ENCODE measurements at regions of chr12 and their contacts with region 1.

Region 1: DNA sequence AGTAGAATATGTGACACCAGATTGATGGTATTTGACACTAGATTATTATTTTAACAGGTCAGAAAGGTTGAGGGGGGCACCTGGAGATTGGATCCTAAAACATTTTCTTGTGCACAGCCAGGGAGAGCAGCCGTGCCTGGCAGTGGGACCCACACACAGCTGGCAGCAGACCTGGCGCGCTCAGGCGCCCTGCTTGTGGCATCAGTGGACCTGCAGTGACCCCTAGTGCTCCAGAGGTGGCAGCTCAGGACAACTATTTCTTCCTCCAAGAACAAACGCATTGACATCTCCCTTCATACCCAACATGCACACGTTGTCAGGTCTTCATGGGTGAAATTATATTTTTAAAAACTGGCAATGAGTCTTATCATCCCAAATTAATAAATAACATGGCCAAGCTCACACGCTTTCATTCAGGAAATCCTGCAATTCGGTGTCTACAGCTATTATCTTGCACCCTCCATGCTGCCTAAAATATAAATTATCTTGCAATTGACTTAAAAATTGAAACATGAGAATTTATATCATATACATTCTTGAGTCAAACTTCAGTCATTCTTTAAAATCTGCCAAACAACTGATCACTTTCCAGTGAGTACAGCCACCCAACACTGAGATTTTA is 7.7 kb upstream of the TMEM132D start:
- DNase-seq: peak; percentile 59 to 75 (median 64)
- ATAC-seq: peak; percentile 65
- H3K4me3 ChIP-seq: no peak overlapping the region
- H3K27ac ChIP-seq: no peak overlapping the region
- H3K4me1 ChIP-seq: no peaks in the 10 kb centered on the region
- H3K27me3 ChIP-seq: no peaks in the 10 kb centered on the region
- CTCF ChIP-seq: peak; percentile 56 to 91 (median 80)
- POLR2A ChIP-seq: no peak

Region 2: GRCh38 chr12:128259556-128260070 is 1651.9 kb before region 1 on chr12:
- intact Hi-C with region 1: loop called (anchors 10 kb)
- DNase-seq: peak; percentile 42 to 62 (median 48)
- ATAC-seq: peak; percentile 52
- H3K4me3 ChIP-seq: no peak overlapping the region
- H3K27ac ChIP-seq: no peak overlapping the region
- H3K4me1 ChIP-seq: no peaks in the 10 kb centered on the region
- H3K27me3 ChIP-seq: no peaks in the 10 kb centered on the region
- CTCF ChIP-seq: peak; percentile 34 to 80 (median 71)
- POLR2A ChIP-seq: no peak

Region 3: DNA sequence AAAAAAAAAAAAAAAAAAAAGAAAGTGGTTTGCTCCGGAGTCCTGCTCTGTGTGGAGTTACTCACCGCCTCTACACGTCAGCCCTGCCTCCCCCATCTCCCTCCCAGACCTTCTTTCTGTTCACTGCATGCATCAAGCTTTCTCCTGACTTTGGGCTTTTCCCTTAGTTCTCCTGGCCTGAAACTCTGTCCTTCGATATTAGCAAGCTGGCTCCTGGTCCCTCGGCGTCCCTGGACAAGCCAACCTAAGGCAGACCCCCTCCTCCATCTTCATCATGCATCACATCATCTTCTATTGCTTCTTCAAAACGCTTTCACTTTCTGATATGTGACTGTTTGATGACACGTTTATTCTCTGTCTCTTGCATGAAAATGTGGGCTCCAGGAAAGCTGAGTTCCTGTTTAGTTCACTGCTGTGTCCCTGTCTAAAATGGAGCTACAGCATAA is 1128.4 kb before region 1 on chr12:
- intact Hi-C with region 1: loop called (anchors 10 kb)
- DNase-seq: no peak
- ATAC-seq: no peak
- H3K4me3 ChIP-seq: no peak overlapping the region
- H3K27ac ChIP-seq: no peak overlapping the region
- H3K4me1 ChIP-seq: no peaks in the 10 kb centered on the region
- H3K27me3 ChIP-seq: no peaks in the 10 kb centered on the region
- CTCF ChIP-seq: no peak
- POLR2A ChIP-seq: no peak

Region 4: DNA sequence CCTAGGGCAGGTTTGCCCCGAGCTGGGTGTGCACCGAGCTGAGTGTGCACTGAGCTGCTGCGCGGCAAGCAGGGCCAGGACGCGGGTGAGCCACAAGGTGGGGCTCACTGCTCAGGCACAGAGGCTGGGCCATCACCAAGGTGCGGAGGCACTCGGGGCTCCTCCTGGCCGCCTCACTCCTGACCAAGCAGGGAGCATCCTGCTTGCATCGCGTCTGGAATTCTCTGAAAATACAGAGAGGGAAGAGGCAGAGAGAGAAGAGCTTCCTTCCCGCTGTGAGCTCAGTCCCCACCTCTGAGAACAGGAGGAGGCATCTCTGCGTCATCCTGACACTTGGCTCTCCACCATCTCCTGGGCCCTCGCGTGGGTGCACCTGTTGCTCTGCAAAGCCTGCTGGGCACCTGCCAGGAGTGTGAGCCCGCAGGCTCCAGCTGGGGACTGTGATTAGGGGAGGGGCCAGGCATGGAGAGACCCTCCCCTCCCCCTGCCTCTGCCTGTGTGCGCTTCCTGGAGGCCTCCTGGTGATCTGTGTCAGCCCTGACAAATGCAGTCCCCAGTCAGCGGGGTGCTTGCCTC is 942.0 kb before region 1 on chr12:
- intact Hi-C with region 1: loop called (anchors 5 kb)
- DNase-seq: peak; percentile 15 to 52 (median 36)
- ATAC-seq: peak; percentile 72
- H3K4me3 ChIP-seq: no peak overlapping the region
- H3K27ac ChIP-seq: no peak overlapping the region
- H3K4me1 ChIP-seq: no peaks in the 10 kb centered on the region
- H3K27me3 ChIP-seq: no peaks in the 10 kb centered on the region
- CTCF ChIP-seq: peak in 6 of 7 experiments; percentile 7 to 52 (median 35)
- POLR2A ChIP-seq: no peak

Region 5: GRCh38 chr12:129949651-129950050 is 38.1 kb after region 1 on chr12:
- intact Hi-C with region 1: no loop called
- DNase-seq: no peak
- ATAC-seq: no peak
- H3K4me3 ChIP-seq: no peak overlapping the region
- H3K27ac ChIP-seq: no peak overlapping the region
- H3K4me1 ChIP-seq: no peaks in the 10 kb centered on the region
- H3K27me3 ChIP-seq: no peaks in the 10 kb centered on the region
- CTCF ChIP-seq: no peak
- POLR2A ChIP-seq: no peak

Region 6: DNA sequence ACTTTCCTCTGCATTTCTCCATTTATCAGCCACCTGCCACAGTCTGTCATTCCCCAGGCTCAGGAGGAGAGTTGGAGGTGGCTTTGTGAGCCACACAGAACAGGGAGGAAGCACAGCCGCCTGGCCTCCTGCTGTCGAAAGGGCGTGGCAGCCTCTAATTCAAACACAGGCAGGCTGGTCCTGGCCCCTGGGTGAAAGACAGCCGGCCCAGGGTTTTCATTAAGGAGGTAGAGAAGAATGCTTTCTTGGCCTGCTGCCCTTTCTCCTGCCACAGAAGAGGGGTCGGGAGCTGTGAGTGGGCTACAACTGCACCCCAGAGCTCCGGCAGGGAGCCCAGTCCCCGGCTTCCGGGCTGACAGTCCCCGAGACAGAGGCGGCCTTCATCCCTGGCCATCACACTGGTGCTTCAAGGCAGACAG is 142.1 kb after region 1 on chr12:
- intact Hi-C with region 1: no loop called
- DNase-seq: no peak
- ATAC-seq: no peak
- H3K4me3 ChIP-seq: no peak overlapping the region
- H3K27ac ChIP-seq: no peak overlapping the region
- H3K4me1 ChIP-seq: no peaks in the 10 kb centered on the region
- H3K27me3 ChIP-seq: no peaks in the 10 kb centered on the region
- CTCF ChIP-seq: no peak
- POLR2A ChIP-seq: no peak

Region 7: DNA sequence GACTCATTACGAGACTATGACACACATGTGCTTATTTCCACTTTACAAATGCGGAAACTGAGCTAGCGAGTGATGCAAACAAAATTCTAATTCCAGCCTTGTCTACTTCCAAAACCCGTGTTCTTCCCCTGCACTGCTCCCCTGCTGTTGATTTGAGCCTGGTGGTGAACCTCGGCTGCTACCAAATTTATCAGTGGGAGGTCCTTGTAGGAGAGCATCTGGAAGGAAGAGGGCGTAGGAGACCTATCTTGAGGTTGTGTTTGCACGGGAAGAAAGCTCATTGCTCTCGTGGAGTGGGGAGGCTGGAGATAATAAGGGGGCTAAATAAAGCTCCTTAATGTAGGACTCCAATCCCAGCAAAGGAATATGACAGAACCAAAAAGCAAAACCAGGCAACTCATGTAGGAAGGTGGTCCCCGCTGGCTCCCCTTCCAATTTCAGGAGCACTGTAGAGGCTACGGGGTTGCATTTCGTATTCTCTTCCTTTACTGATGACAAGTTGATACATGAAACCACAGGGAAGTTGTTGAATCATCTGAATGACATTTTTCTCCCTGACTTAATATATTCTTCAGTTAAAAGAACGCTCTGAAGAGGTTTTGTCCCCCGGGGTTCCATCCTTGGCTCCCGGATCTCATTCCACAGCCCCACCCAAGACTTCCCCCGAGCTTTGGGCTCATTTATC is 303.3 kb after region 1 on chr12:
- intact Hi-C with region 1: no loop called
- DNase-seq: no peak
- ATAC-seq: no peak
- H3K4me3 ChIP-seq: no peak overlapping the region
- H3K27ac ChIP-seq: no peak overlapping the region
- H3K4me1 ChIP-seq: no peaks in the 10 kb centered on the region
- H3K27me3 ChIP-seq: no peaks in the 10 kb centered on the region
- CTCF ChIP-seq: no peak
- POLR2A ChIP-seq: no peak

Region 8: DNA sequence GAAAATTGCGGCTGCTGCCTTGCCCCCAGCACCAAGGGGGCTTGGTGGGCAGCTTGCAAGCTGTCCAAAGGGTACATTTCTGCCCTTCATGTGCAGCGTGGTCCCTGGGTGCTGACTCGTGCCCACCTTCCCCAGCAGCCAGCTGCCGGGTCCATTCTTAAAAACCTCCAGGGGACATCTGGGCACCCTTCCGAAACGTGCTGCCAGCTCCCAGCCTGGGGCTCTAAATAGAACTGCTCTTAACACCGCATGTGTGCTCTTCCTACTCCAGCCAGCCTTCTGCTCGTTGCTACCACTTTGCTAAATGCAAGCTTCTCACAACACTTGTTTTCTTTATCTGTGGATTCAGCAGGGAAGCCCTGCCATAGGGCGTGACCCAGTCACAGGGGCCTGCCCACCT is 738.6 kb after region 1 on chr12:
- intact Hi-C with region 1: no loop called
- DNase-seq: no peak
- ATAC-seq: no peak
- H3K4me3 ChIP-seq: no peak overlapping the region
- H3K27ac ChIP-seq: no peak overlapping the region
- H3K4me1 ChIP-seq: no peaks in the 10 kb centered on the region
- H3K27me3 ChIP-seq: no peaks in the 10 kb centered on the region
- CTCF ChIP-seq: no peak
- POLR2A ChIP-seq: no peak